MCF 10A (cell line): ENCODE measurements at regions of chr11 and their contacts with region 1.

Region 1: GRCh38 chr11:32713496-32713895 is 81.0 kb downstream of the CCDC73 start:
- DNase-seq: peak; percentile 8
- H3K4me3 Mint-ChIP-seq: no peak overlapping the region
- H3K27ac Mint-ChIP-seq: no peak overlapping the region
- H3K4me1 Mint-ChIP-seq: no peaks in the 10 kb centered on the region
- H3K27me3 Mint-ChIP-seq: no peaks in the 10 kb centered on the region
- CTCF ChIP-seq: peak; percentile 36

Region 2: DNA sequence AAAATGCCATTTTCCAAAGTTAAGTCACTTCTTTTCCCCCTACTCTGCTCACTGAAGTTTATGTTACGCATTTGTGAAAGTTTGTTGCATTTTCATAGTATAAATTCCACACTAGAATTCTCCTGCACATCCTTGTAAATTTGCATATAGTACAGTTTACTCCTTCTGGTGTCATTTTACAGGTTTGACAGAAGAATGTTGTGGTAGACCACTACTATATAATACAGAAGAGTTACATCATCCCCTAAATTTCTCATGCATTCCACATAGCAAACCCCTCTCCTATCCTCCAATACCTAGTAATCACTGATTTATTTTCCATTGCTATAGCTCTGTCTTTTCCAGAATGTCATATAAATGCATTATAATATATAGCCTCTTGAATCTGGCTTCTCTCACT is 16.5 kb after region 1 on chr11:
- CTCF ChIA-PET with region 1: interaction called, 10 read pairs
- POLR2A ChIA-PET with region 1: interaction called, 8 read pairs
- intact Hi-C with region 1: no loop called
- DNase-seq: no peak
- H3K4me3 Mint-ChIP-seq: no peak overlapping the region
- H3K27ac Mint-ChIP-seq: no peak overlapping the region
- H3K4me1 Mint-ChIP-seq: no peaks in the 10 kb centered on the region
- H3K27me3 Mint-ChIP-seq: peaks cover 11% of the 10 kb centered on the region
- CTCF ChIP-seq: no peak